GM23248 (cell line): ENCODE measurements at regions of chr6 and their contacts with region 1.

Region 1: GRCh38 chr6:100664274-100665040 is 199.7 kb upstream of the SIM1 start:
- DNase-seq: peak; percentile 56
- H3K4me3 ChIP-seq: no peak overlapping the region
- H3K27ac ChIP-seq: peak overlapping the region; percentile 85
- H3K4me1 ChIP-seq: peaks cover 23% of the 10 kb centered on the region
- H3K27me3 ChIP-seq: no peaks in the 10 kb centered on the region

Region 2: DNA sequence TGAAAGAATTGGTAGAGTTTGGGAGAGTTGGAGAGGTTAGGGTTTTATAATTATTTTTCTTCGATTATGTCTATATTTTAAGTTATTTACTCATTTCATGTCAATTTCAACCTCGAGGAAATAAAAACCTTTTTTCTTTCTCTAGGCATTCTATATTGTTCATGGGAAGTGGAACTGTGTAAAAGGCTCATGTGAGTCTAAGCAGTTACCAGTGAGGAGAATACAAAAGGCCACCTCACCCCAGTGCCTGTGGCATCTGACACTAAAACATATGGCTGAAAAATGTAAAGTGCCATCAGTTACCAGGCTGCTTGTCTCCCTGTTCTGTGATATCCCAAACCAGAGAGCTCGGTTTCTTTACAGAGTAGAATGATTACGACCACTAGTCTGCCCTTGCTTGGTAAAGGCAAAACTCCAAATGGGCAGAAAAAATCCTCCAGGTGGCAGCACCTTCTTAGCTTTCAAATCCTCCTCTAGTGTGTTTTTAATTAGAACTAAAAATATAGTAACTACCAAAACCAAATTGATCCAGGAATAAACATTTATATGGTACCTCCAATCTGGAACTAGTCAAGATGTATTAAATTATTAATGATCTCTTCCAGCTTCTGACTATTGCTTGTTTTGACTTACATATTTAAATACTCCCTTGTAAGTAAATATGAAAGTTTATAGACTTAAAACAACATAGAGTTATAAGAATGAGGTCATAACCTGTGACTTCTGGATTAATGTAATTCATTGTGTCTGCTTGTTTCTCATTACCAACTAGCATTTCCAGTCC is 547.9 kb before region 1 on chr6:
- in situ Hi-C with region 1: loop called (anchors 10 kb)
- DNase-seq: peak; percentile 78
- H3K4me3 ChIP-seq: no peak overlapping the region
- H3K27ac ChIP-seq: no peak overlapping the region
- H3K4me1 ChIP-seq: peaks cover 8% of the 10 kb centered on the region
- H3K27me3 ChIP-seq: no peaks in the 10 kb centered on the region